CD4-positive, alpha-beta memory T cell (primary cell): ENCODE measurements at regions of chr1 and their contacts with region 1.

Region 1: DNA sequence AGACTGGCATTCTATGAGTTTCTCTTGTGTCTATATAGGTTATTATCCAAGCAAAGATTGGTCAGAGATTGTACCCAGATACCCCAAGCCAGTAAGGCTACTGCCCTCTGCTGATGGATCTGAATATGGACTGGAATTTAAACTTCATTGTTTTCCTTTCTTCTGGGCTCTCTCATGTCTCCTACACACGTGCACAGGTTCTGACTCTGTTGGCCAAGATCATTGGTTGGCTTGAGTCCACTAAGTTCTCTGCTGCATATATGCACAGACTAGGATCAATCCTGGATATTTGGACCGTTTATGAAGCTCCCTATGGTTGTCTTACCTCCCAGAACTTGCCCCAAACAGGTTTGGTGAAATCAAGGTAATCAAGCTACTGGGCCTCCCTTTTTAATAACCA is 69.7 kb downstream of the CC2D1B start:
- DNase-seq: peak in 4 of 5 donors; percentile 23 to 42 (median 27)
- H3K4me3 ChIP-seq: no peak overlapping the region
- H3K4me3 Mint-ChIP-seq: no peak overlapping the region
- H3K27ac ChIP-seq: no peak overlapping the region
- H3K27ac Mint-ChIP-seq: no peak overlapping the region
- H3K4me1 ChIP-seq: no peaks in the 10 kb centered on the region
- H3K4me1 Mint-ChIP-seq: peaks cover 0 to 2% (median 0%) of the 10 kb centered on the region in 4 donors
- H3K27me3 ChIP-seq: no peaks in the 10 kb centered on the region
- H3K27me3 Mint-ChIP-seq: no peaks in the 10 kb centered on the region

Region 2: DNA sequence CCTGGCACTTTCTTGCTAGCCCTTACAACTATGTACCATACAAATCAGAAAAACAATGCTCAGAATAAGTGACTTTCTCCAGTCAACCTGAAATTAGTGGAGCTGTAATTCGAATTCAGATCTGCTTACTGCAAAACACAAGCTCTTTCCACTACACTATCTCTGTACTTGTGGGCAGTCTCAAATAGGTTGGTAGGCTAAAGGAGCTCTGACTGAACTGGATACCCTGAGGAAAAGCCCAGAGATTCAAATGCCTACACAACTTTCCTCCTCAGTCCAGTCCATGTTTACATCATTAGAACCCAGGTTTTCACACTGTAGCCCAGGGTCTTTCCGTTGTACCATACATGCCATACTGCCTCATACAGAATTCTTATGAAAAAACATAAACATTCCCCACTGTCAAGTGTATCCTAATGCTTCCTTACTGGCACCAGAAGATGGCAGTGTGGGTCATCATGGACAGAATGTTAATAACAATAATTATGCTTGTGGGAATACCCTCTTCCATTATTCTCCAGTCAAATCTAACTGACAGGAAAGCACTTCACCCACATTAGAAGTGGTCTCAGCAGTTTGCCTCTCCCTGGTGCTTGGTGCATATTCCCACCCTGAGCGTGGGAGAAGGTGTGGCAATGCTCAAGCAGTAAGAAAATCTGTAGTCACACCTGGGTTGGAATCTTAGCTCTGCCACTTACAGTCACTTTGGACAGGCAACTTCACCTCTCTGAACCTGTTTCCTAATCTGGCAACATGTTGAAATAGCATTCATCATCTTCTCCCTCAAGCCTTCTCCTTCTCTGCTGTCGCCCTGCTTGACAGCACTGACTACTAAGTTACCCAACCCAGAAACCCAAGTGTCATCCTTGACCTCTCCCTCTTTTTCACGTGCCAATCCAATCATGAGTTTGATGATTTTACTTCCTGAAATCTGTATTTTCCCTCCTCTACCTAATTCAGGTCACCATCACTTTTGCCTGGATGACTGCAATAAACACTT is 168.9 kb before region 1 on chr1:
- CTCF ChIA-PET with region 1: interaction called, 22 read pairs
- POLR2A ChIA-PET with region 1: no interaction called
- intact Hi-C with region 1: loop called (anchors 1 kb)
- DNase-seq: peak in 4 of 5 donors; percentile 18 to 31 (median 26)
- H3K4me3 ChIP-seq: no peak overlapping the region
- H3K4me3 Mint-ChIP-seq: no peak overlapping the region
- H3K27ac ChIP-seq: no peak overlapping the region
- H3K27ac Mint-ChIP-seq: no peak overlapping the region
- H3K4me1 ChIP-seq: no peaks in the 10 kb centered on the region
- H3K4me1 Mint-ChIP-seq: no peaks in the 10 kb centered on the region
- H3K27me3 ChIP-seq: no peaks in the 10 kb centered on the region
- H3K27me3 Mint-ChIP-seq: peaks cover 10 to 17% of the 10 kb centered on the region in 2 donors

Region 3: GRCh38 chr1:52210044-52210443 is 86.3 kb before region 1 on chr1:
- CTCF ChIA-PET with region 1: no interaction called
- POLR2A ChIA-PET with region 1: no interaction called
- intact Hi-C with region 1: no loop called
- DNase-seq: no peak
- H3K4me3 ChIP-seq: no peak overlapping the region
- H3K4me3 Mint-ChIP-seq: no peak overlapping the region
- H3K27ac ChIP-seq: no peak overlapping the region
- H3K27ac Mint-ChIP-seq: no peak overlapping the region
- H3K4me1 ChIP-seq: no peaks in the 10 kb centered on the region
- H3K4me1 Mint-ChIP-seq: peaks cover 0 to 3% (median 1%) of the 10 kb centered on the region in 4 donors
- H3K27me3 ChIP-seq: no peaks in the 10 kb centered on the region
- H3K27me3 Mint-ChIP-seq: peaks cover 0 to 2% of the 10 kb centered on the region in 2 donors

Region 4: DNA sequence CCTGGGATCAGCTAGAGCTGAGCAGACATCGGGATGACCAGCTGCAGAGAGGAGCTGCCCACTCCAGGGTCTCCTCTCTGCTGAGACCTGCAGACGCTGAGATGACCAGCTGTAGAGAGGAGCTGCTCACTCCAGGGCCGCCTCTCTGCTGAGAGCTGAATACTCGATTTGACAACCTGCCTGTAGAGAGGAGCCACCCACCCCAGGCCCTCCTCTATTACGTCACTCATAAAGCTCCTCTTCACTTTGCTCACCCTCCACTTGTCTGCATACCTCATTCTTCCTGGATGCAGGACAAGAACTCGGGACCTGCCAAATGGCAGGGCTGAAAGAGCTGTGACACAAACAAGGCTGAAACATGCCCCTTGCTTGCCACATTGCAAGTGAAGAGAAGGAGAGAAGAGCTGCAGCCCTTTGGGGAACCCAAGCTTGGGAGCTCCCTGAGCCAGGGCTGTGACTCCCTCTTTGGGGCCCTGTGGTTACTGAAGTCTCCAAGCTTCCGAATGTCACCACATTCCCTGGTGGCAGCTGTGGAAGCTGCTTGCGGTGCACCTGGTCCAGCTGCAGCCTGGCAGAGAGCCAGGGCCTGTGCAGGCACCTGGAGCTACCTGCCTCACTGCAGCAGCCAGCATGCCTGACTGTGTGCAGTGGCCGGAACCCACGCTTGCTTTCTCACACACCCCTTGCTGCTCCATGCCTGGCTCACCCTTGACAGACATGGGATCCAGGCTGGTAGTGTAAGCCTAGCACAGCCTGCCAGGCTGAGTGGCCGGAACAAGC is 10.1 kb after region 1 on chr1:
- CTCF ChIA-PET with region 1: interaction called, 13 read pairs
- POLR2A ChIA-PET with region 1: no interaction called
- intact Hi-C with region 1: no loop called
- DNase-seq: no peak
- H3K4me3 ChIP-seq: no peak overlapping the region
- H3K4me3 Mint-ChIP-seq: no peak overlapping the region
- H3K27ac ChIP-seq: no peak overlapping the region
- H3K27ac Mint-ChIP-seq: no peak overlapping the region
- H3K4me1 ChIP-seq: no peaks in the 10 kb centered on the region
- H3K4me1 Mint-ChIP-seq: peaks cover 0 to 1% (median 0%) of the 10 kb centered on the region in 4 donors
- H3K27me3 ChIP-seq: no peaks in the 10 kb centered on the region
- H3K27me3 Mint-ChIP-seq: no peaks in the 10 kb centered on the region

Region 5: DNA sequence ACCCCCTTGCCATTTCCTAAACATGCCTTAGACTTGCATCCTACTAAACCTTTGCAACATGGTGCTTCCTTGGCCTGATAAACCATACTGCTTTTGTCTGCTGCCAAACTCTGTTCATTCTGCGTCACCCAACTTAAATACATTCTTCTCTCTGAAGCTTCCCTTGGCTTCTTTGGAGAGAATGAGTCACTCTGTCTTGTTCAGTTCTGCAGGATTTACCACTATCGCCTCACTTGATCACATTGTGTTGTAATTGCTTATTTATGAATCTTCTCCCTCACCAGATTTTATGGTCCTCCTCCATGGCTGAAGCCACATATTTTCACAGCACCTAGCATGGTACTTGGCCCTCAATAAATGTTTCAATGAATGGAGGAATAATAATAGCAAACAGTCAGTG is 278.2 kb after region 1 on chr1:
- CTCF ChIA-PET with region 1: no interaction called
- POLR2A ChIA-PET with region 1: no interaction called
- intact Hi-C with region 1: no loop called
- DNase-seq: no peak
- H3K4me3 ChIP-seq: no peak overlapping the region
- H3K4me3 Mint-ChIP-seq: no peak overlapping the region
- H3K27ac ChIP-seq: no peak overlapping the region
- H3K27ac Mint-ChIP-seq: peak overlapping the region in 1 of 7 donors; percentile 17
- H3K4me1 ChIP-seq: peaks cover 3% of the 10 kb centered on the region
- H3K4me1 Mint-ChIP-seq: peaks cover 9 to 19% (median 13%) of the 10 kb centered on the region in 4 donors
- H3K27me3 ChIP-seq: no peaks in the 10 kb centered on the region
- H3K27me3 Mint-ChIP-seq: no peaks in the 10 kb centered on the region